PC-3 (cell line): ENCODE measurements at regions of chr11 and their contacts with region 1.

Region 1: DNA sequence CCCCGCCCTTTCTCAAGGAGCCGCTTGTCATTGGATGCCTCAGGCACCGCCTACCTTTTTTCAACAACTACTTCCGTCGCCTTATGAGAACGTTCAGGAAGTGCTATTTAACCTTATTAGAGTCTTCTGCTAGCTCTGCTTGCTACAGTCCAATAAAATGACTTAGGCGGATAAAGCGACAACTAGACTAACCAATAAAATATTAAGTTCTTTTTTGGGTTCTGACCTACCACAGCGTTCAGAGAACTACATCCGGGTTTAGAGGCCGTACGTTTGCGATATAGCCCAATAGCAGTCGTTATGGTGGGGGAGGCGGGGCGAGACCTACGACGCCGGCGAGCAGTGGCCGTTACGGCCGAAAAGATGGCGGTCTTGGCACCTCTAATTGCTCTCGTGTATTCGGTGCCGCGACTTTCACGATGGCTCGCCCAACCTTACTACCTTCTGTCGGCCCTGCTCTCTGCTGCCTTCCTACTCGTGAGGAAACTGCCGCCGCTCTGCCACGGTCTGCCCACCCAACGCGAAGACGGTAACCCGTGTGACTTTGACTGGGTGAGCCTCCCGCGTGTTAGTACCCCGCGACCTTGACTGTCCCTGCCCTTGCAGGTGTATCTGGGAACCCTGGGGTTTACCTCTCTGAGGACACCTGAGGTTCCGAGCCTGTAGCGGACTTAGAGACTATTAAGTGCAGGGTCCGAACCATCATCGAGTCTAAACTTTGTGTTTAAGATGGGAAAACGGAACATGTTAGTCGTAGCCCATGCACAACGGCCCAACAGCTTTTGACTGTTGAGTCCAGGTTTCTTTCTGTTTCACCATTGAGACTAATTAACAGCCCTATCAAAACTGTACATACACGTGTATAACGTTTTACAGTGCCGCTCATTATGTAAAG is at the start of gene TMX2:
- DNase-seq: peak; percentile 99
- ATAC-seq: peak; percentile 92
- H3K4me3 ChIP-seq: peak within 1 kb of the TSS; percentile 99
- H3K27ac ChIP-seq: peak within 1 kb of the TSS; percentile 75
- H3K4me1 ChIP-seq: peaks cover 24% of the 10 kb centered on the region
- H3K27me3 ChIP-seq: no peaks in the 10 kb centered on the region
- CTCF ChIP-seq: no peak
- total RNA-seq, gene TMX2: 228 and 241 TPM in 2 replicates

Region 2: DNA sequence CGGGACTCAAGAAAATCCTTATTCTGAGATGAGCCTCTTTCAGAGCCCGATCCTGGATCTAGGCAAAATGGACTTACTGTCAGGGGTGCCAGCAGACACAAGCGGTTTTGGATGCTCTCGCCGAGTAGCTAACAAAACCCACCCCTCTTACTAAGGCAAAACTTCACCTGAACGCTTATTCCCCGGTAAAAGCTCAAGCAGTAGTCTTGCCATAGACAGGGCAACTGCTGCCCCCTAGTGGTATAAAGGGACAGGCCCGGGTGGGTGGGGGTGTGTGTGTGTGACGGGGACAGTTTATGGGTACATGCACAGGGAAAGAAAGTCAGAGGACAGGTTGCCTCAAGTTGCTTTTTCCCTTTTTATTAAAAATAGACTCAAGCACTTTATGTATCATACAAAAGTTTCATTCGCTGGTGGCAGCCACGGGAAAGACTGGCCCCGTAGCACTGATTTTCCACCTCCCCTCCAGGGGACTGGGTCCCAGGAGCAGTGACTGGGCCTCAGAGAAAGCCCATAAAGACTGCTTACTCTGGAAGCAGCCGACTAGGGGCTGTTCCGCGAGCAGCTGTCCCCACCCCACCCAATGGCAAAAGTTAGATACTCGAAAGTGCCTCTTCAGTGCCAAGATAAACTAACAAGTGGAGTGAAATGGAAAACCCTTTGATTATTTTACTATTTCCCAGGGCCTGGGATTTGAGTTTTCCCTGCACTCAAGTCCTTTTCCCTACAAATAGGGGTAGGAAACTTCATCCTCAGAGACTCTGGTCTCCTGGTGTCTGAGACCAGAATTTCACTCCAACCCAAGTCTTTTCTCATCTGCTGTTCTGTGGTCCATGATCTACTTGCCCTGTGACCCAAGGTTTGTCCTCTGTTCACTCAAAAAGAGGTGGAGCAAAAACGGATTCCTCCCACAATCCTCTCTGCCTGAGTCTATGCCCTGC is 67.5 kb before region 1 on chr11:
- CTCF ChIA-PET with region 1: no interaction called
- POLR2A ChIA-PET with region 1: no interaction called
- intact Hi-C with region 1: no loop called
- DNase-seq: peak; percentile 88
- ATAC-seq: peak; percentile 65
- H3K4me3 ChIP-seq: no peak overlapping the region
- H3K27ac ChIP-seq: no peak overlapping the region
- H3K4me1 ChIP-seq: peaks cover 15% of the 10 kb centered on the region
- H3K27me3 ChIP-seq: peaks cover 29% of the 10 kb centered on the region
- CTCF ChIP-seq: peak; percentile 96

Region 3: GRCh38 chr11:57657194-57658022 is 55.1 kb before region 1 on chr11 and contains the start of gene CLP1:
- CTCF ChIA-PET with region 1: no interaction called
- POLR2A ChIA-PET with region 1: no interaction called
- intact Hi-C with region 1: loop called (anchors 1 kb)
- DNase-seq: peak; percentile 100
- ATAC-seq: peak; percentile 98
- H3K4me3 ChIP-seq: peak within 1 kb of the TSS; percentile 94
- H3K27ac ChIP-seq: 0 out of 2 replicates have a peak within 1 kb of the TSS, but pooled peaks have one; percentile 11
- H3K4me1 ChIP-seq: peaks cover 8% of the 10 kb centered on the region
- H3K27me3 ChIP-seq: no peaks in the 10 kb centered on the region
- CTCF ChIP-seq: no peak
- total RNA-seq, gene CLP1: 23.0 and 28.4 TPM in 2 replicates

Region 4: GRCh38 chr11:57667736-57668435 is 44.6 kb before region 1 on chr11 and contains the start of gene ZDHHC5:
- CTCF ChIA-PET with region 1: no interaction called
- POLR2A ChIA-PET with region 1: no interaction called
- intact Hi-C with region 1: loop called (anchors 1 kb)
- DNase-seq: peak; percentile 99
- ATAC-seq: peak; percentile 87
- H3K4me3 ChIP-seq: peak within 1 kb of the TSS; percentile 97
- H3K27ac ChIP-seq: peak within 1 kb of the TSS; percentile 88
- H3K4me1 ChIP-seq: peaks cover 16% of the 10 kb centered on the region
- H3K27me3 ChIP-seq: no peaks in the 10 kb centered on the region
- CTCF ChIP-seq: peak; percentile 39; the same call in 1 of the 2 replicates
- total RNA-seq, gene ZDHHC5: 86.7 and 102 TPM in 2 replicates

Region 5: GRCh38 chr11:57741132-57742086 is 28.9 kb after region 1 on chr11 and contains the start of gene SELENOH:
- CTCF ChIA-PET with region 1: no interaction called
- POLR2A ChIA-PET with region 1: no interaction called
- intact Hi-C with region 1: loop called (anchors 1 kb)
- DNase-seq: peak; percentile 98
- ATAC-seq: peak; percentile 94
- H3K4me3 ChIP-seq: peak within 1 kb of the TSS; percentile 90
- H3K27ac ChIP-seq: peak within 1 kb of the TSS; percentile 46
- H3K4me1 ChIP-seq: peaks cover 11% of the 10 kb centered on the region
- H3K27me3 ChIP-seq: no peaks in the 10 kb centered on the region
- CTCF ChIP-seq: no peak
- total RNA-seq, gene SELENOH: 306 and 353 TPM in 2 replicates

Region 6: GRCh38 chr11:57787920-57788702 is 75.6 kb after region 1 on chr11:
- CTCF ChIA-PET with region 1: no interaction called
- POLR2A ChIA-PET with region 1: no interaction called
- intact Hi-C with region 1: loop called (anchors 1 kb)
- DNase-seq: no peak
- ATAC-seq: no peak
- H3K4me3 ChIP-seq: no peak overlapping the region
- H3K27ac ChIP-seq: no peak overlapping the region
- H3K4me1 ChIP-seq: peaks cover 25% of the 10 kb centered on the region
- H3K27me3 ChIP-seq: no peaks in the 10 kb centered on the region
- CTCF ChIP-seq: no peak